GM12878 (cell line): ENCODE measurements at regions of chr18 and their contacts with region 1.

Region 1: GRCh38 chr18:57561728-57562423 is 24.6 kb downstream of the FECH start:
- DNase-seq: no peak
- ATAC-seq: peak; percentile 77
- H3K4me3 ChIP-seq: no peak overlapping the region
- H3K27ac ChIP-seq: no peak overlapping the region
- H3K4me1 ChIP-seq: no peaks in the 10 kb centered on the region
- H3K27me3 ChIP-seq: no peaks in the 10 kb centered on the region
- CTCF ChIP-seq: peak; percentile 61 to 73 (median 71)
- EP300 ChIP-seq: no peak
- POLR2A ChIP-seq: no peak
- RAD21 ChIP-seq: peak; percentile 85

Region 2: DNA sequence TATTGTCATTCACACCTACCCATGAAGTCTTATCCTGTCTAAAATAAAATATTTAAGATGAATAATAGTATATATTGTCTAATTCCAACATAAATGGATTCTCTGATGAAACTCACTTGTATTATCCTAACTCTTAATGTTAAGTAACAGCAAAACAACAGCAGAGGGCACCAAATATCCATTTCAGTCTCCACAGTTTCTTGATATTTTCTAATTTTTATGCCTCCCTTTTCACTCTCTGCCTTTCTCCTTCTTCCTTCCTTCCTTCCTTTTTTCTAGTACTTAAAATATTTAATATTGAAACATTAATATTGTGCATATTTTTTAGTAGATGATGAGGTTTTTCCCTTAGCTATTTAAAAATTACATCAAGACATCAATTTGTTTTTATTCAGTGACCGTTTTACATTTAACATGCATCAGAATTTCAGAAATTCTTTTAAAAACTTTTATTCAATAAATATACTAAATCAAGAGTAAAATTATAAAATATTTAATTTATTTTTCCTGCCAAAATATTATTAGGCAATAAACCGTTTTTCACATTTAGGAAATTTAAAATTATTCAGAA is 813.1 kb before region 1 on chr18:
- CTCF ChIA-PET with region 1: interaction called, 54 read pairs
- POLR2A ChIA-PET with region 1: no interaction called
- RAD21 ChIA-PET with region 1: interaction called, 6 read pairs
- SMC1A ChIA-PET with region 1: interaction called, 8 read pairs
- in situ Hi-C with region 1: loop called (anchors 5 kb)
- intact Hi-C with region 1: loop called (anchors 1 kb)
- DNase-seq: no peak
- ATAC-seq: no peak; the same call in 2 of the 3 replicates
- H3K4me3 ChIP-seq: no peak overlapping the region
- H3K27ac ChIP-seq: no peak overlapping the region
- H3K4me1 ChIP-seq: no peaks in the 10 kb centered on the region
- H3K27me3 ChIP-seq: no peaks in the 10 kb centered on the region
- CTCF ChIP-seq: peak; percentile 36 to 60 (median 45); a peak in 5 of 6 replicates
- EP300 ChIP-seq: no peak
- POLR2A ChIP-seq: no peak
- RAD21 ChIP-seq: peak; percentile 69

Region 3: GRCh38 chr18:56789004-56789888 is 772.6 kb before region 1 on chr18:
- CTCF ChIA-PET with region 1: interaction called, 16 read pairs
- POLR2A ChIA-PET with region 1: no interaction called
- RAD21 ChIA-PET with region 1: interaction called, 5 read pairs
- SMC1A ChIA-PET with region 1: interaction called, 7 read pairs
- in situ Hi-C with region 1: no loop called
- intact Hi-C with region 1: loop called (anchors 2 kb)
- DNase-seq: no peak
- ATAC-seq: peak; percentile 89
- H3K4me3 ChIP-seq: no peak overlapping the region
- H3K27ac ChIP-seq: no peak overlapping the region
- H3K4me1 ChIP-seq: no peaks in the 10 kb centered on the region
- H3K27me3 ChIP-seq: no peaks in the 10 kb centered on the region
- CTCF ChIP-seq: peak; percentile 65 to 67 (median 66)
- EP300 ChIP-seq: no peak
- POLR2A ChIP-seq: no peak
- RAD21 ChIP-seq: peak; percentile 71

Region 4: GRCh38 chr18:57446322-57446721 is 115.6 kb before region 1 on chr18:
- CTCF ChIA-PET with region 1: interaction called, 3 read pairs
- POLR2A ChIA-PET with region 1: no interaction called
- RAD21 ChIA-PET with region 1: no interaction called
- SMC1A ChIA-PET with region 1: interaction called, 3 read pairs
- in situ Hi-C with region 1: no loop called
- intact Hi-C with region 1: loop called (anchors 5 kb)
- DNase-seq: no peak
- ATAC-seq: peak; percentile 90
- H3K4me3 ChIP-seq: no peak overlapping the region
- H3K27ac ChIP-seq: no peak overlapping the region
- H3K4me1 ChIP-seq: no peaks in the 10 kb centered on the region
- H3K27me3 ChIP-seq: peaks cover 2 to 10% of the 10 kb centered on the region in 2 experiments
- CTCF ChIP-seq: peak; percentile 77 to 82 (median 79)
- EP300 ChIP-seq: no peak
- POLR2A ChIP-seq: no peak
- RAD21 ChIP-seq: peak; percentile 70

Region 5: GRCh38 chr18:57523171-57523956 is 38.5 kb before region 1 on chr18:
- CTCF ChIA-PET with region 1: no interaction called
- POLR2A ChIA-PET with region 1: no interaction called
- RAD21 ChIA-PET with region 1: no interaction called
- SMC1A ChIA-PET with region 1: no interaction called
- in situ Hi-C with region 1: no loop called
- intact Hi-C with region 1: no loop called
- DNase-seq: no peak
- ATAC-seq: no peak
- H3K4me3 ChIP-seq: no peak overlapping the region
- H3K27ac ChIP-seq: no peak overlapping the region
- H3K4me1 ChIP-seq: no peaks in the 10 kb centered on the region
- H3K27me3 ChIP-seq: peaks cover 0 to 3% of the 10 kb centered on the region in 2 experiments; a peak in 1 of 4 replicates
- CTCF ChIP-seq: no peak
- EP300 ChIP-seq: no peak
- POLR2A ChIP-seq: no peak
- RAD21 ChIP-seq: no peak

Region 6: GRCh38 chr18:57544936-57545660 is 16.8 kb before region 1 on chr18:
- CTCF ChIA-PET with region 1: interaction called, 12 read pairs
- POLR2A ChIA-PET with region 1: no interaction called
- RAD21 ChIA-PET with region 1: no interaction called
- SMC1A ChIA-PET with region 1: interaction called, 3 read pairs
- in situ Hi-C with region 1: no loop called
- intact Hi-C with region 1: no loop called
- DNase-seq: peak; percentile 24
- ATAC-seq: peak; percentile 93
- H3K4me3 ChIP-seq: no peak overlapping the region
- H3K27ac ChIP-seq: no peak overlapping the region; the same call in 1 of the 2 replicates
- H3K4me1 ChIP-seq: peaks cover 4% of the 10 kb centered on the region
- H3K27me3 ChIP-seq: no peaks in the 10 kb centered on the region
- CTCF ChIP-seq: no peak
- EP300 ChIP-seq: no peak
- POLR2A ChIP-seq: no peak
- RAD21 ChIP-seq: no peak

Region 7: DNA sequence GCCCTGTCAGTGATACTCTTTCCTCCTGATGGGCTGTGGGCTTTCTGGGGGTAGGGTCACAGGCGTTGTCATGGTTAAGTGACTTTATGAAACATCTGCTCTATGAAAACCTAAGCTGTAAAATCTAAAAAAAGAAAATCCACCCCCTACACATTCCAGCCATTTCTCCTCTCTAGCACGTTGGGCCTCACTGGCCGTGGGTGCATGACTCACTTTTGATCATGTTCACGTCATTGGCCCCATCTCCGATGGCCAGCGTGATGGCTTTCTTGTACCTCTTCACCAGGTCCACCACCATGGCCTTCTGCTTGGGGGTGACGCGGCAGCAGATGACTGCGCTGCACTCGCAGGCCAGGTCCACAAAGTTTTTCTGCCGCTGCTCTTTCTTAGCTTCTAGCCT is 99.1 kb after region 1 on chr18:
- CTCF ChIA-PET with region 1: no interaction called
- POLR2A ChIA-PET with region 1: no interaction called
- RAD21 ChIA-PET with region 1: no interaction called
- SMC1A ChIA-PET with region 1: no interaction called
- in situ Hi-C with region 1: no loop called
- intact Hi-C with region 1: no loop called
- DNase-seq: no peak
- ATAC-seq: no peak
- H3K4me3 ChIP-seq: no peak overlapping the region
- H3K27ac ChIP-seq: no peak overlapping the region
- H3K4me1 ChIP-seq: no peaks in the 10 kb centered on the region
- H3K27me3 ChIP-seq: no peaks in the 10 kb centered on the region
- CTCF ChIP-seq: no peak
- EP300 ChIP-seq: no peak
- POLR2A ChIP-seq: no peak
- RAD21 ChIP-seq: no peak